Thyroid gland (tissue), 4 donors: ENCODE measurements at regions of chr14 and their contacts with region 1.

Region 1: DNA sequence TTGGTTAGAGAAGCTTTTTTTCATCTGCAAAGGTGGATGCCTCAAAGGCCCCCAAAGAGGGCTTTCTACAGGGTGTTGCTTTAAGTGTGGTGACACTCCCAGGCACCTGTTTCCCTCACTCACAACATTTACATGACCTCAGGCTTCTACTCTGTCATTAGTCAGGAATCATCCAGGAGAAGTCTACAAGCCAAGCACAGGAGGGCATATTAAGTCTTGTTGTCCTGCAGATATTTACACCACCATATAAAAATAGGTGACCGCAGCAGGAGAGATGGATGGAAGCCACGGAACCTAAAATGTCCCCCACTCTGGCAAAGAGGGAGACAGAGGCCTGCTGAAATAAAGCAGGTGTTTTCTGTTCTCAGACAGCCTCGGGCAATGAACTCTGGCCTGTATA is 7.5 kb upstream of the DPF3 start:
- DNase-seq: no peak
- H3K4me3 ChIP-seq: no peak overlapping the region
- H3K27ac ChIP-seq: no peak overlapping the region
- H3K4me1 ChIP-seq: no peaks in the 10 kb centered on the region
- H3K27me3 ChIP-seq: no peaks in the 10 kb centered on the region
- CTCF ChIP-seq: no peak
- POLR2A ChIP-seq: no peak

Region 2: GRCh38 chr14:72516936-72517700 is 384.2 kb before region 1 on chr14:
- intact Hi-C with region 1: loop called (anchors 2 kb)
- DNase-seq: peak; percentile 65 to 70
- H3K4me3 ChIP-seq: no peak overlapping the region
- H3K27ac ChIP-seq: no peak overlapping the region
- H3K4me1 ChIP-seq: peaks cover 10 to 24% of the 10 kb centered on the region in 2 donors
- H3K27me3 ChIP-seq: no peaks in the 10 kb centered on the region
- CTCF ChIP-seq: peak; percentile 74 to 97 (median 82)
- POLR2A ChIP-seq: no peak

Region 3: DNA sequence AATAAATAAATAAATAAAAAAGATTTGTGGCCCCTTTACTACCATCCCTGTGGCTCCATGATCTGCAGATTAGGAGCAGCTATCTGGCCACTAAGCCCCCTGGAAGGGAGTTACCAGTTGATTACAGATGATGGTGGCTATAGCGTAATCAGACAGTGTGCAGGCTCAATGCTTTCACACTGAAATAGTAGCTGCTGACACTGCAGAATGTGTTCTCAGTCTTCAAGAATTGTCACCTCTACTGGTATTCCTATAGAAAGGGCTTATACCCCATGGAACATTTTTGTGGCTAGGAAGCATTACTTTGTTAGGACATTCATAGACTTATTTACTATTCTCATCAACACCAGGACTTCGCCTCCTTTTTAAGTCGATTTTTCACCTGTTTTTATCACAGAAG is 55.9 kb after region 1 on chr14:
- intact Hi-C with region 1: no loop called
- DNase-seq: no peak
- H3K4me3 ChIP-seq: no peak overlapping the region
- H3K27ac ChIP-seq: no peak overlapping the region
- H3K4me1 ChIP-seq: peaks cover 0 to under 1% of the 10 kb centered on the region in 2 donors
- H3K27me3 ChIP-seq: no peaks in the 10 kb centered on the region
- CTCF ChIP-seq: no peak
- POLR2A ChIP-seq: no peak